Common myeloid progenitor, CD34-positive (primary cell): ENCODE measurements at regions of chr21 and their contacts with region 1.

Region 1: DNA sequence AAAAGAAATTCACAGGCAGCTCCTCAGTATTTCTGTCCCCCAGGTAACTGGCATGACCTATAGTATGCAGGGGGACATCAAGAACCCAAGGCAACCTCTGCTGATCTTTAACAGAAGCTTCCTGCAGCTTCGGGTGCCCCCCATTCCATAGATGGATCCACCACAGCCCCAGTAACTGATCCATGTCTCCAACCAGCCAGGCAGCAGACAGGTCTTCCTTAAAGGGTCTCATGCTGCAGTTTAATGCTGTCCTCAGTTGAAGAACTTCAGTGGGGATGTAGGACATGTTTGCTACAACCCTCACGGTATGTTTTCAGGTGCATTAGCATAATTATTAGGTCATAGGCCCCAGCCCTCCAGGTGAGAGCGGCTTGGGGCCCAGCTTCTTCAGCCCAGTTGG is 90.9 kb upstream of the OLIG2 start:
- DNase-seq: no peak
- H3K4me3 ChIP-seq: no peak overlapping the region
- H3K27ac ChIP-seq: no peak overlapping the region
- H3K4me1 ChIP-seq: peaks cover 5 to 25% (median 19%) of the 10 kb centered on the region in 4 experiments
- H3K27me3 ChIP-seq: no peaks in the 10 kb centered on the region

Region 2: DNA sequence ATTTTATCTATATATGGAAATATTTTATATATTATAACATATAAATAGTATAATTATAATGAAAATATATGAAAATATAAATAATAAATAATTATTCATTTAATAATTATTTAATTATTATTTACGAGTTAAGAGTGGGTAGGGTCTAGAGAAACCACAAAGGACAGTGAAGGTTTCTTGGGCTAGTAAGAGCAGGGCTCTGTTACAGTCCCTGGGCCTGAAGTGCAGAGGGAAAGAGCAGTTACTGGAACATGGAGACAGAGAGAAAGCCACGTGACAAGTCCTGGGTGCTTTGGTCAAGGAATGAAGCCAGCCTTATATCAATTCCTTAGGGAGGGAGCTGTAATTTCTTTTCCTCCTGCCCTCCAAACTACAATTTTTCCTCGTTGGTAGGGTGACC is 26.3 kb before region 1 on chr21:
- CTCF ChIA-PET with region 1: no interaction called
- POLR2A ChIA-PET with region 1: no interaction called
- DNase-seq: peak in 1 of 3 donors; percentile 6
- H3K4me3 ChIP-seq: no peak overlapping the region
- H3K27ac ChIP-seq: no peak overlapping the region
- H3K4me1 ChIP-seq: no peaks in the 10 kb centered on the region
- H3K27me3 ChIP-seq: peaks cover 0 to 4% (median 0%) of the 10 kb centered on the region in 5 experiments

Region 3: GRCh38 chr21:32921632-32922230 is 13.1 kb before region 1 on chr21:
- CTCF ChIA-PET with region 1: interaction called, 11 read pairs
- POLR2A ChIA-PET with region 1: no interaction called
- DNase-seq: peak; percentile 36 to 55 (median 46)
- H3K4me3 ChIP-seq: no peak overlapping the region
- H3K27ac ChIP-seq: no peak overlapping the region
- H3K4me1 ChIP-seq: no peaks in the 10 kb centered on the region
- H3K27me3 ChIP-seq: peaks cover 0 to 4% (median 0%) of the 10 kb centered on the region in 5 experiments